ENCODE measurements at regions of chr5 and their contacts with region 1.

Region 1: GRCh38 chr5:141412854-141413539 is at the start of gene PCDHGA10:
- DNase-seq: peak; percentile 44
- ATAC-seq: peak; percentile 67
- total RNA-seq, gene PCDHGA10: 5.3 TPM

Region 2: DNA sequence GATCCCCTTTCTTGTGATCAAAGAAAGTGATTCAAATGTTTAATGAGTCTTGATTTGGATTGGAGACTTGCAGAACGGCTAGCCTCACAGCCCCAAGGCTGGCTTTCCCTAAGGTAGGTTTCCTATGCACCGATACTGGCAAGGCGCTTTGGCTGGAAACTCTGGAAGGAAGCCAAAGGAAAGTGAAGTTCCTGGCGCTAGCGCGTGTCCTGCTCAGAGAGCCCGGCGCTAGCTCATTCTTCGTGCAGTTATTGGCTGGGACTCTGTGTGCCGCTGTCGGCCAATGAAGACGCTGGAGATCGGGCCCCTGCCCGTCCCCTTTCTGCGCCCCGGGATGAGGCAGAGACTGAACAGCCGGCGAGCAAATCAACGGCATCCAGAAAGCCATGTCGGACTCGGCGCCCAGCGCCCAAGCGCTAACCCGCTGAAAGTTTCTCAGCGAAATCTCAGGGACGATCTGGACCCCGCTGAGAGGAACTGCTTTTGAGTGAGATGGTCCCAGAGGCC is 62.7 kb after region 1 on chr5 and contains the start of gene PCDHGC3:
- intact Hi-C with region 1: loop called (anchors 10 kb)
- DNase-seq: peak; percentile 94
- ATAC-seq: peak; percentile 98
- total RNA-seq, gene PCDHGC3: 13.4 TPM

Measured in left ventricle myocardium superior (tissue), 1 donor.